ENCODE measurements at regions of chr15 and their contacts with region 1.

Region 1: DNA sequence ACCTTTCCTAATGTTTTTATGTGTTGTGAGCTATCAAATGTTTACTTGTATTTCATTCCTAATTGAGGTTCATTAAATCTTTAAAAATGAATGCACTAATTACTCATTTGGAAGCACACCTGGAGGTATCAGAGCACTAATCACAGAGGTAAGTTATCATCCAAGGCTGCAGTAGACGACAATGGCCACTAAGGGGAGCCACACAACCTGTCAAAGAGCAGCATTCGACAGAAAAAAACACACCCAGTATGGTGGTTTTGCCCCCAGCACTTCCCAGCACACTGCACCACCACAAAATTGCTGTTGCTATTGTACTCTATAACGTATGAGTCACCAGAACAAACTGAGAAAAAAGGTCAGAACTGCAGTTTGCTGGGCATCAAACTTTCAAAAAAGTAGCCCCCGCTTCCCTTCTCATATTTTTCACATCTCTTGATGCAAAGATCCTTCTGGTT is 205.9 kb upstream of the IGF1R start:
- DNase-seq: peak; percentile 81
- ATAC-seq: peak; percentile 97
- H3K4me3 Mint-ChIP-seq: no peak overlapping the region
- H3K27ac Mint-ChIP-seq: no peak overlapping the region
- H3K4me1 Mint-ChIP-seq: peaks cover 3% of the 10 kb centered on the region
- H3K27me3 Mint-ChIP-seq: peaks cover 9% of the 10 kb centered on the region

Region 2: DNA sequence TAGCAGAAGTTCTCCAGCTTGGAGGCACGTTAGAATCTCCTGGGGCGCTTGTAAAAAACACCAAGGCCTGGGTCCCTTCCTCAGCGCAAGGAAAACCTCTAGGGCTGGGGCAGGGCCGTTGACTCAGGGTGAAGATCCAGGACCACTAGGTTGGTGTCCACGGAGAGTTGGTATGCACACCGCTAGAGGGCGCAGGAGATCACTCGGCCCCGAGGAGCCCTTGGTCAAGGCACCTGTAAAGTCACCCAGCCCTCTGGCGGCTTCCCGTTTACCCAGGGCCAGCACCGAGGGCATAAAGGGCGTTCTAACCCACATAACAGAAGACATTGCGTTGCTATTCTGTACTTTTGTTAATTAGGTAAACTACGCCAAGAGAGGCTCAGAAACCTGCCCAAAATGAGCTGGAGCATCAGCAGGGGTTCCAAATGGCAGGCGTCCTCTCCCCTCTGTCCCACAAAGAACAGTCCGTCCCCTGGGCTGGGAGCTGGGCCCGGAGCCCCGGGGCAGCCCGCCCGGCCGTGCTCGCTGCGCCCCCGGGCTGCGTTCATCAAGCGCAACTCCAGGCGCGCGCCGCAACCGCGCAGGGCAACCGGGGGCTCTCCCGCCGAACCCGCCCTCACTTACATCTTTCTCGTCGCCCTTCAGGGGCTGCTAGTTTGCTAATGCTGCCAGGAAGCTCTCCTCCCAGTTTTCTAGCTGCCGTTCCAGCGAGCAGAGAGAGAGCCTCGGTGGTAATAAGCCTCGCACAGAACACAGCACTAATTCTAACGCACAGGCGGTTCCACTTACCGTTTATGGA is 149.8 kb before region 1 on chr15:
- CTCF ChIA-PET with region 1: no interaction called
- POLR2A ChIA-PET with region 1: no interaction called
- intact Hi-C with region 1: no loop called
- DNase-seq: peak; percentile 75
- ATAC-seq: peak; percentile 66
- H3K4me3 Mint-ChIP-seq: no peak overlapping the region
- H3K27ac Mint-ChIP-seq: no peak overlapping the region
- H3K4me1 Mint-ChIP-seq: peaks cover 1% of the 10 kb centered on the region
- H3K27me3 Mint-ChIP-seq: peaks cover 16% of the 10 kb centered on the region

Region 3: GRCh38 chr15:98658831-98659699 is 216.7 kb after region 1 on chr15:
- CTCF ChIA-PET with region 1: interaction called, 5 read pairs
- POLR2A ChIA-PET with region 1: no interaction called
- intact Hi-C with region 1: loop called in 1 of 2 experiments (anchors 1 kb)
- DNase-seq: peak; percentile 40
- ATAC-seq: peak; percentile 81
- H3K4me3 Mint-ChIP-seq: no peak overlapping the region
- H3K27ac Mint-ChIP-seq: no peak overlapping the region
- H3K4me1 Mint-ChIP-seq: peaks cover 41% of the 10 kb centered on the region
- H3K27me3 Mint-ChIP-seq: no peaks in the 10 kb centered on the region

Region 4: DNA sequence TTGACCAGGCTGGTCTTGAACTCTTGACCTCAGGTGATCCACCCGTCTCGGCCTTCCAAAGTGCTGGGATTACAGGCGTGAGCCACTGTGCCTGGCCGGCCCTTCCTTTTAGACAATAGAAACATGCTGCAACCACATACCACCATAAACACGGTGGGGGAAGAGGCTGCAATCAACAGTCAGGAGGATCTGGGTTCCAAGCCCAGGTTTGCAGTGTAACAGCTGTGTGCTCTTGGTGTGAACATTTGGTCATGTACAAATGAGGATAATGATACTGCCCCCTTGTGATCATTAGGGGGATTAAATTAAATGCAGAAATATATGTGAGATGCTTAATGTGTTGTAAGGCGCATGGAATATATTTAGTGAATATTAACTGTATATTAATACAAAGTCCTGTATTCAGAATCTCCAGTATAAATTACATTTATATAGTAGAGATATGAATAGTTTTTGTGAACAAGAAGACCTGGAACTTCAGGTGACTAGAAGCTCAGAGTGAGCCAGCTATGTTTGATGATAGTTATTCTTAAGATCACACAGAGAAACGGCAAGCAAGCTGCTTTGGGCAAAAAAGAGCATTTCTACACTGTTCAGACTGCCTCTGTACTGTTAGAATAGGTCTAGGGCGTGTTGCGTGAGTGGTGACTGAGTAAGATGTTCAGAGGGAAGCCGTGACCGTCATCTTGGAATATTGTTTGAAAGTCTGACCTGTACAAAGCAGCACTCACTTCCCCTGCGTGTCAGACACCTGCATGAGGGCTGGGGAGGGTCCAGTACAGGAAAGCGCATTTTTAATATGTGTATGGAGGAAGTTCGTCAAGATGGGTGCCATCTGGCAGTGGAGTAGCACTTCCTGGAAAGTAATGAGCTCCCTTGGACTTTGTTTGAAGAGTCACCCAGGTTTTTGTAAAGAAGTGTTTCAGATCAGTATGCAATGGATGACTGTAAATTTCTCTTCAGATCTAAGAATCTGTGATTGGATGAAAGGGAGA is 439.4 kb after region 1 on chr15:
- CTCF ChIA-PET with region 1: no interaction called
- POLR2A ChIA-PET with region 1: no interaction called
- intact Hi-C with region 1: loop called in 1 of 2 experiments (anchors 10 kb)
- DNase-seq: peak; percentile 16
- ATAC-seq: peak; percentile 72
- H3K4me3 Mint-ChIP-seq: no peak overlapping the region
- H3K27ac Mint-ChIP-seq: no peak overlapping the region
- H3K4me1 Mint-ChIP-seq: peaks cover 9% of the 10 kb centered on the region
- H3K27me3 Mint-ChIP-seq: no peaks in the 10 kb centered on the region

Region 5: DNA sequence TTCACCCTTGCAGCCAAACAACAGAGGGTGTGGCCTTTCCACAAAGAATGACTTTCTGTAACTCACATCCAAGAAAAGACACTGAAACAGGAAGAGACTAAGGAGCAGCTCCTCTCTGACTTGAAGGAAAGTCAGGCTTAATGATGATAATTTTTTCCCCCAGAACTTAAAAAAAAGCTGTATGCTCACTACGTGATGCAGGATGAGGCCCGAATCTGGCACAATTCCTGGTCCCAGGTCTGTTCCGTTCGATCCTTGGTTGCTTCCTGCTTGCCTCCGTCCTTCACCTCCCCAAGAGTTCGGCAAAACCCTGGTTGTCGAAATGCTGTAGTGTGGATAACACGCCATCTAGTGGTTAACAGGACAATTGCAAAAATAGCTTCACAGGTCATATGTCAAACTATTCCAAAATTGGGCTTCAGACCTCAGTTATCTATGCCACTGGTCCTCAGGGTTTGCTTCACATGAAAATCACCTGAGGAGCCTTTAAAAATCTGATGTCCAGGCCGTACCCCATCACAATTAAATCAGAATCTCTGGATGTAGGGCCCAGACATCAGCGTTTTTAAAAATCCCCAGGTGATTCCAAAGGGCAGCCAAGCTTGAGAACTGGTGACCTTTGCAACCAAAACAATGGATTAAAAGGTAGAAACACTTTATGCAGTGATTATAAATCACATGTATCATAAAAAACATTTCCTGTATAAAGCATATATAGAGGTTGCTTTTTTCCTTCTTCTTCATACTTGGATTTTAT is 634.3 kb after region 1 on chr15:
- CTCF ChIA-PET with region 1: interaction called, 11 read pairs
- POLR2A ChIA-PET with region 1: no interaction called
- intact Hi-C with region 1: loop called (anchors 1 kb)
- DNase-seq: peak; percentile 58
- ATAC-seq: peak; percentile 87
- H3K4me3 Mint-ChIP-seq: peak overlapping the region; percentile 65
- H3K27ac Mint-ChIP-seq: peak overlapping the region; percentile 89
- H3K4me1 Mint-ChIP-seq: peaks cover 6% of the 10 kb centered on the region
- H3K27me3 Mint-ChIP-seq: peaks cover 10% of the 10 kb centered on the region

Region 6: GRCh38 chr15:99213187-99213811 is 770.9 kb after region 1 on chr15:
- CTCF ChIA-PET with region 1: no interaction called
- POLR2A ChIA-PET with region 1: no interaction called
- intact Hi-C with region 1: loop called (anchors 1 to 2 kb)
- DNase-seq: peak; percentile 81
- ATAC-seq: peak; percentile 65
- H3K4me3 Mint-ChIP-seq: no peak overlapping the region
- H3K27ac Mint-ChIP-seq: no peak overlapping the region
- H3K4me1 Mint-ChIP-seq: no peaks in the 10 kb centered on the region
- H3K27me3 Mint-ChIP-seq: no peaks in the 10 kb centered on the region